ENCODE measurements at regions of chr20 and their contacts with region 1.

Region 1: GRCh38 chr20:63819224-63819921 is 11.7 kb downstream of the ZBTB46 start:
- DNase-seq: peak in 2 of 5 donors; percentile 65 to 73
- H3K4me3 ChIP-seq: no peak overlapping the region
- H3K27ac ChIP-seq: peak overlapping the region; percentile 3 to 6
- H3K4me1 ChIP-seq: peaks cover 8% of the 10 kb centered on the region
- H3K27me3 ChIP-seq: no peaks in the 10 kb centered on the region
- CTCF ChIP-seq: peak; percentile 25 to 44 (median 38)
- EP300 ChIP-seq: no peak
- POLR2A ChIP-seq: no peak

Region 2: GRCh38 chr20:63756648-63756991 is 62.8 kb before region 1 on chr20:
- intact Hi-C with region 1: no loop called
- DNase-seq: no peak
- H3K4me3 ChIP-seq: no peak overlapping the region
- H3K27ac ChIP-seq: no peak overlapping the region
- H3K4me1 ChIP-seq: no peaks in the 10 kb centered on the region
- H3K27me3 ChIP-seq: no peaks in the 10 kb centered on the region
- CTCF ChIP-seq: no peak
- EP300 ChIP-seq: no peak
- POLR2A ChIP-seq: no peak

Region 3: DNA sequence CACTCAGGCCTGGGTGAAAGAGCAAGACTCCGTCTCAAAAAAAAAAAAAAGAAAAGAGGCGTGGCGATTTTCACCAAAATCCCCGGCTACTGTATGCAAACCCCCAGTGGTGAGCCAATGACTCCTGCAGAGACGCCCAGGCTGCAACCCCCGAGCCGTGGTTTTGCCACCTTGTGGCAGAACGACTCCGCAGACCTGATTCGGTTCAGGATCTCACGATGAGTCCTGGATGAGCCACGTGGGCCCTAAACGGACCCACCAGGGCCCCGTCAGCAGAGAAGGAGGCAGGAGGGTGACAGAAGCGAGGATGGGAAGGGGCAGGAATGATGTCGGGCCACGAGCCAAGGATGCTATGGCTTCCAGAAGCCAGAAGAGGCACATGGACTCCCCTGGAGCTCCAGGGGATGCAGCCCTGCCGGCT is 37.3 kb before region 1 on chr20:
- intact Hi-C with region 1: loop called in 1 of 4 experiments (anchors 5 kb)
- DNase-seq: no peak
- H3K4me3 ChIP-seq: no peak overlapping the region
- H3K27ac ChIP-seq: no peak overlapping the region
- H3K4me1 ChIP-seq: peaks cover 3% of the 10 kb centered on the region
- H3K27me3 ChIP-seq: no peaks in the 10 kb centered on the region
- CTCF ChIP-seq: no peak
- EP300 ChIP-seq: no peak
- POLR2A ChIP-seq: no peak

Region 4: DNA sequence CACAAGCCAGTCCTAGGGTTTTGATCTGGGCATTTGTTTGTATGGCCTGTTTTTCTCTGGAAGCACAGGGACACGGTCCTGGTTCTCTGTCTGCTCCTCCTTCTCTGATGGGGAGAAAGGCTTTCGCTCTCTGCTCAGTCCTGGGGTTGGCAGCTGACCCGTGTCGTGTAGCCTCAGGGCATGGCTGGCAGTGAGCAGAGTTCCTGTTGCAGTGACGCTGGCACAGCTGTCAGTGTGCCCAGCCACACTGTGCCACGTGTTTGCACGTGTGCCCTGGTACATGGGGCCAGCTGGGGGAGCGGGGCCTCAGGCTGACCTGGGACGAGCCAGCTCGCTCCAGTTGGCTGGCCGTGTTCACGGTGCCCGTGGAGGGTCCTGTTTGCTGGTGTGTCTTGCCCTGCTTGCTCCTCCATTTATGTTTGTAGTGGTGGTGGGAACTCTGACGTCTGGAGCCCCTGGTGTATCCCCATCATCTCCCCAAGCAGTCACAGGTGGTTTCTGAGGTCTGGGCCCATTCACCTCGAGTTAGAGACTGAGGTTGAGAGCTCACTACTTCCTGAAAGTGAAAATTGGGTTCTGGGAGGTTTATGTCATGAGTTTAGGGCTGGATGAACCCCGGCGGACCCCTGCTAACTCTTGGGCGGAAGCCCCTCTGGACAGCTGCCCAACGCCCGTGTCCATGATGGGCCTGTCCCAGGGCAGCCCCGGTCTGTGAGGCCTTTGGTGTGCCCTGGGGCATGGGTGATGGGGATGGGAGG is 65.3 kb after region 1 on chr20:
- intact Hi-C with region 1: no loop called
- DNase-seq: no peak
- H3K4me3 ChIP-seq: no peak overlapping the region
- H3K27ac ChIP-seq: no peak overlapping the region
- H3K4me1 ChIP-seq: no peaks in the 10 kb centered on the region
- H3K27me3 ChIP-seq: no peaks in the 10 kb centered on the region
- CTCF ChIP-seq: no peak
- EP300 ChIP-seq: no peak
- POLR2A ChIP-seq: no peak